ENCODE measurements at regions of chr6 and their contacts with region 1.

Region 1: DNA sequence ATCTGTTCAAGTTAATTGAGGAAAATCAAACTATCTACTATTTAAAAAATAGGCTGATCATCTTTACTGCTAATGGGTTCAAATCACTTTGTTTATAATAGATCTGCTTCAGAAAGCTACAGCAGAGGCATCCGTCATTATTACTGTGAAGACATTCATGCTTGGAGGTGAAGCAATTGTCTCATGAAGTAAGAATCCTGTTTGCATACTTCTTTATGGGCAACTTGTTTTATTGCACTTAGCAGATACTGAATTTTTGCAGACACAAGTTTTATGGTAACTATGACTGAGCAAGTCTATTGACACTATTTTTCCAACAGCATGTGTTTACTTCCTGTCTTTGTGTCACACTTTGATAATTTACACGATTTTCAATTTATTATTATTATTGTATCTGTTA is 573.9 kb downstream of the RFPL4B start:
- DNase-seq: no peak
- ATAC-seq: peak; percentile 85

Region 2: GRCh38 chr6:111823831-111824607 is 1097.0 kb before region 1 on chr6:
- intact Hi-C with region 1: no loop called
- DNase-seq: no peak
- ATAC-seq: no peak

Region 3: GRCh38 chr6:113147544-113147943 is 226.6 kb after region 1 on chr6:
- intact Hi-C with region 1: loop called in 1 of 2 experiments (anchors 5 kb)
- DNase-seq: no peak
- ATAC-seq: no peak

Region 4: GRCh38 chr6:113361014-113361645 is 440.1 kb after region 1 on chr6:
- intact Hi-C with region 1: no loop called
- DNase-seq: no peak
- ATAC-seq: no peak

Measured in left colon (tissue), 2 donors.